ENCODE measurements at regions of chr17 and their contacts with region 1.

Region 1: DNA sequence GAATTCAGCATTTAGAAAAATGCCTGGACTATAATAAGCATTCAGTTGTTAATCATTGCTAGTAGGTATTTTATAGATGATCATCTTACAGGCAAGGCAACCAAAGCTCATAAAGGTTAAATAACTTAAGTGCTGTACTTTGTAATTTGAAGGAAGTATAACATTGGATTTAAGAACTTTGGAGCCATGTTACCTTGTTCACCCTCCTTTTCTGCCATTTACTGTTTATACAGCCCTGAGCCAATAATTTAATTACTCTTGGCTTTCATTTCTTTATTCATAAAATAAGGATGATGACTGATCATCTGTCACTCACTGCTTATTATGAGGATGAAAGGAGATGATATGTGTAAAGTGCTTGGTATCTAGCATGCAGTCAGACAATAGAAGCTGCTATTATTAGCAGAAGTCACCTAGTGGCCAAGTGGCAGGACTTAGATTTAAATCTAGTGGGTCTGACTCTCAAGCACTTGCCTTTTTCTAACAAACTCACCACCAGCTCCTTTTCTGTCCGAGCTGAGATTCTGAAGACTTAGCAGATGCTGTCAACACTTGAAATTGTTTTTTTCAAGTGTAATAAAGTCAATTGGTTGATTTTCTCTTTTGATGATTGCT is 18.3 kb upstream of the DDX52 start:
- DNase-seq: no peak
- ATAC-seq: no peak
- H3K4me3 ChIP-seq: no peak overlapping the region
- H3K27ac ChIP-seq: no peak overlapping the region
- H3K4me1 ChIP-seq: no peaks in the 10 kb centered on the region
- H3K27me3 ChIP-seq: no peaks in the 10 kb centered on the region
- CTCF ChIP-seq: no peak

Region 2: DNA sequence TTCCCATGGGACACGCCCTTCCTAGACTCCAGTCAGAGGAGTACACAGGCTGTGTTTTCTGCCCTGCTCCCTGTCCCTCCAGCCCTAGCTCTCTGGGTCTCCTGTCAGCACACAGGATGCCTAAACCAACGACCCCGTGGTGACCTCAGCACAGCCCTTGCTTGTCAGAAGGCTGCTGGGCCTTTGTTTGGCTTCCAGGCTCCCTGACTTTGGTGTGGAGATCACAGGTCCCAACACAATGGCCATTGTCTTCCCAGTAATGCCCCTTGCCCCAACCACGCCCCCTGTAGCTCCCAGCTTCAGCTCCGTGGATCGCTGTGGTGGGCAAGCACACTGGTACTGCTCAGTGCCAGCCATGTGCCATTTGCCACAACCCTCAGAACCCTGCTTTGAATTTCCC is 68.4 kb after region 1 on chr17:
- CTCF ChIA-PET with region 1: interaction called, 10 read pairs
- POLR2A ChIA-PET with region 1: no interaction called
- in situ Hi-C with region 1: no loop called
- intact Hi-C with region 1: no loop called
- DNase-seq: no peak
- ATAC-seq: no peak
- H3K4me3 ChIP-seq: no peak overlapping the region
- H3K27ac ChIP-seq: no peak overlapping the region
- H3K4me1 ChIP-seq: no peaks in the 10 kb centered on the region
- H3K27me3 ChIP-seq: no peaks in the 10 kb centered on the region
- CTCF ChIP-seq: no peak

Measured in Panc1 (cell line).